B cell (primary cell): ENCODE measurements at regions of chr6 and their contacts with region 1.

Region 1: GRCh38 chr6:144215932-144216667 is 65.8 kb downstream of the STX11 start:
- DNase-seq: peak; percentile 97
- ATAC-seq: peak; percentile 84
- H3K4me3 ChIP-seq: peak overlapping the region; percentile 76 to 85 (median 77)
- H3K4me3 Mint-ChIP-seq: peak overlapping the region; percentile 98
- H3K27ac ChIP-seq: peak overlapping the region; percentile 83
- H3K27ac Mint-ChIP-seq: peak overlapping the region; percentile 100
- H3K4me1 ChIP-seq: peaks cover 23 to 30% of the 10 kb centered on the region in 2 donors
- H3K4me1 Mint-ChIP-seq: peaks cover 40% of the 10 kb centered on the region
- H3K27me3 ChIP-seq: no peaks in the 10 kb centered on the region
- H3K27me3 Mint-ChIP-seq: peaks cover 3% of the 10 kb centered on the region
- CTCF ChIP-seq: peak; percentile 72

Region 2: DNA sequence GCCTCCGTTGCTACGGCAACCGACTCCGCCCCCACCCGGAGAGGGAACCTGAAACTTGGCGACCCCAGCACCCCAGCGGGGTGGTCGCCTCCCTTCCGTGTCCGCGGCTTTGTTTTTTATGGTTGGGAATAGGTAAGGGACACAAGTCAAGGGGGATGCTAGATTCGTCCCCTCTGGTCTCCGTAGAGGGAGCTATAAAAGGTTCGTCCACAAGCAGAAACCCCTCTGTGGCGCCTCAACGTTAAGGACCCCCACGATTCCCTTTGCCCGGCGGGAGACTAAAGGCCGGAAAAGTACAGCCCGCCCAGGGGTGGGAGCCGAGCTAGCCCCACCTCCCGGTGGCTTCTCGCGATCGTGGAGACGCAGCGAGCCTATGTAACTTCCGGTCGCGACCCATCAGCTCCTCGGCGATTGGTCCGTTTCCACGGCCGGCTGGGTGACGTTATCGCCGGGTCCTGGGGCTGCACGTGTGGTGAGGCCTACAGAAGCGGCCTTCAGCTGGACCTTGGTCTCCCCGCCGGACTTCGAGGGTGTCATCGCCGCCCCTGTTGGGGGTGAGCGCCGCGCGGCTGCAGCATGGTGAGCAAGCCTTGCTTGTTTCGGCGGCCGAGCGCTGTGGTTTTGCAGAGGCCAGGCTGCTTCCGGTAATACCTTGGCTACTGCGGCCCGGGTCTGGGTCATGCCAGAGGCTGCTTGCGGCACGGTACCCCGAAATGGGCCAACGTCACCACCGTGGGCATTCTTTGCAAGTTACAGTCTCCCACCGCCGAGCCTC is 373.0 kb before region 1 on chr6 and contains the start of gene LTV1:
- CTCF ChIA-PET with region 1: interaction called, 3 read pairs
- POLR2A ChIA-PET with region 1: no interaction called
- intact Hi-C with region 1: loop called (anchors 5 kb)
- DNase-seq: peak; percentile 95
- ATAC-seq: peak; percentile 97
- H3K4me3 ChIP-seq: peak within 1 kb of the TSS; percentile 72 to 94 (median 90)
- H3K4me3 Mint-ChIP-seq: peak within 1 kb of the TSS; percentile 93
- H3K27ac ChIP-seq: peak within 1 kb of the TSS; percentile 86 to 93
- H3K27ac Mint-ChIP-seq: peak within 1 kb of the TSS; percentile 95
- H3K4me1 ChIP-seq: peaks cover 11 to 17% of the 10 kb centered on the region in 2 donors
- H3K4me1 Mint-ChIP-seq: peaks cover 17% of the 10 kb centered on the region
- H3K27me3 ChIP-seq: no peaks in the 10 kb centered on the region
- H3K27me3 Mint-ChIP-seq: peaks cover 11% of the 10 kb centered on the region
- CTCF ChIP-seq: no peak
- total RNA-seq, gene LTV1: 23.6 and 27.3 TPM in 2 replicates

Region 3: GRCh38 chr6:144095331-144096002 is 120.6 kb before region 1 on chr6 and contains the start of gene SF3B5:
- CTCF ChIA-PET with region 1: interaction called, 9 read pairs
- POLR2A ChIA-PET with region 1: interaction called, 5 read pairs
- intact Hi-C with region 1: loop called (anchors 1 kb)
- DNase-seq: peak; percentile 99
- ATAC-seq: peak; percentile 97
- H3K4me3 ChIP-seq: peak within 1 kb of the TSS; percentile 63 to 98 (median 73)
- H3K4me3 Mint-ChIP-seq: peak within 1 kb of the TSS; percentile 100
- H3K27ac ChIP-seq: peak within 1 kb of the TSS; percentile 77 to 84
- H3K27ac Mint-ChIP-seq: peak within 1 kb of the TSS; percentile 100
- H3K4me1 ChIP-seq: peaks cover 16 to 22% of the 10 kb centered on the region in 2 donors
- H3K4me1 Mint-ChIP-seq: peaks cover 23% of the 10 kb centered on the region
- H3K27me3 ChIP-seq: no peaks in the 10 kb centered on the region
- H3K27me3 Mint-ChIP-seq: no peaks in the 10 kb centered on the region
- CTCF ChIP-seq: no peak
- total RNA-seq, gene SF3B5: 104 and 111 TPM in 2 replicates

Region 4: DNA sequence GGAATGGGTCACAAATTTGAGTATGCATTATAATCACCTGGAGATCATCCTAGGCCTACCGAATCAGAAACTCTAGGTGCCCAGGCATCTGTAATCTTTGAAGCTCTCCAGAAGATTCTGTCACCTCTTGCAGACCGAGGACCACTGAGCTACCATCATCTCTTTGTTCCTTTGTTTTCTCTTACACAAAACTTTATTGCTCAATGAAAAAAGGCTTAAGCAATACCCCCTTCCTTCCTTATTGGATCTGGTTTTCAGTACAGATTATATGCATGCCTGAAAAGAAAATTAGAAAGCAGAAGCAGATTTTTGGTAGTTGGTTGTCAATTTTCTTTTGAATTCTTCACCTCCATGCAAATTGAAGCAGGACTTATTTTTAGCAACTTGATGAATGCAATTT is 34.5 kb before region 1 on chr6:
- CTCF ChIA-PET with region 1: no interaction called
- POLR2A ChIA-PET with region 1: no interaction called
- intact Hi-C with region 1: no loop called
- DNase-seq: no peak
- ATAC-seq: no peak
- H3K4me3 ChIP-seq: no peak overlapping the region
- H3K4me3 Mint-ChIP-seq: no peak overlapping the region
- H3K27ac ChIP-seq: no peak overlapping the region
- H3K27ac Mint-ChIP-seq: no peak overlapping the region
- H3K4me1 ChIP-seq: peaks cover 11 to 14% of the 10 kb centered on the region in 2 donors
- H3K4me1 Mint-ChIP-seq: peaks cover 27% of the 10 kb centered on the region
- H3K27me3 ChIP-seq: no peaks in the 10 kb centered on the region
- H3K27me3 Mint-ChIP-seq: no peaks in the 10 kb centered on the region
- CTCF ChIP-seq: no peak

Region 5: DNA sequence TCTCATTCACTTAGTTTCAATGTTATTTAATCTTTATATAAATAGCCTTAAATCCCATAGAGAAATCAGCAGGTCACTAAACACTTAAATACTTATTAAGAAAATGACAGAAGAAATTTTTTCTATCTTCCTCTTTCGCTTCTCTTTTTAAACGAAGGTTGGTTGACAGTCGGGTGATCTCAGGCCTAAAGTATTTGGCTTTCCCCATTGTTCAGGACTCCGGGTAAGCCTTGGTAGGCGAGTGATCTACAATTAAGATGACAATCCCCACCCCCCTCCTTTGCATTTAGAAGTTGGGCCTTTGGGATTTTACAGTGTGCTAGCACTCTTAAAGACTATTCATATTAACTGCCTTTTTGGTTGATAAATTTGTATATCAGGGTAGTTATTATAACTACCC is 49.3 kb after region 1 on chr6:
- CTCF ChIA-PET with region 1: interaction called, 4 read pairs
- POLR2A ChIA-PET with region 1: no interaction called
- intact Hi-C with region 1: loop called (anchors 5 kb)
- DNase-seq: peak; percentile 71
- ATAC-seq: peak; percentile 91
- H3K4me3 ChIP-seq: no peak overlapping the region
- H3K4me3 Mint-ChIP-seq: peak overlapping the region; percentile 29
- H3K27ac ChIP-seq: no peak overlapping the region
- H3K27ac Mint-ChIP-seq: no peak overlapping the region
- H3K4me1 ChIP-seq: peaks cover 17% of the 10 kb centered on the region in 2 donors
- H3K4me1 Mint-ChIP-seq: peaks cover 20% of the 10 kb centered on the region
- H3K27me3 ChIP-seq: no peaks in the 10 kb centered on the region
- H3K27me3 Mint-ChIP-seq: no peaks in the 10 kb centered on the region
- CTCF ChIP-seq: no peak

Region 6: DNA sequence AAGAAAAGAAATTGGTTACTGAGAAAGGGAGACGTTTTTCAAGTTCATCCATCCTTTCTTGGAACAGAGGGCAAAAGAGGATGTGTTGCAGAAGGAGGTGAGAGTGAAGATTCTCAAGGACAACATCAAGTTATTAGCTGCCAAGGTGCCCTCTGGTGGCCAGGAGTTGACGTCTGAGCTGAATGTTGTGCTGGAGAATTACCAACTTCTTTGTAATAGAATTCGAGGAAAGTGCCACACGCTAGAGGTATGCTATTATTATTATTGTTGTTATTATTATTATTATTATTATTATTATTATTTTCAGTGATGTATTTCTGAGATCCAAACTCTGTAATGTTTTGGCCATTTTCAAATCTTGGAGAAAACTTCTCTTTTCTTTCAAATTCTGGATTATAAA is 266.0 kb after region 1 on chr6:
- CTCF ChIA-PET with region 1: interaction called, 46 read pairs
- POLR2A ChIA-PET with region 1: no interaction called
- intact Hi-C with region 1: loop called (anchors 1 kb)
- DNase-seq: peak; percentile 76
- ATAC-seq: peak; percentile 71
- H3K4me3 ChIP-seq: no peak overlapping the region
- H3K4me3 Mint-ChIP-seq: no peak overlapping the region
- H3K27ac ChIP-seq: peak overlapping the region in 1 of 2 donors; percentile 21
- H3K27ac Mint-ChIP-seq: peak overlapping the region; percentile 3
- H3K4me1 ChIP-seq: no peaks in the 10 kb centered on the region
- H3K4me1 Mint-ChIP-seq: no peaks in the 10 kb centered on the region
- H3K27me3 ChIP-seq: no peaks in the 10 kb centered on the region
- H3K27me3 Mint-ChIP-seq: no peaks in the 10 kb centered on the region
- CTCF ChIP-seq: peak; percentile 80